Right ventricle myocardium inferior (tissue), 1 donor: ENCODE measurements at regions of chr3 and their contacts with region 1.

Region 1: DNA sequence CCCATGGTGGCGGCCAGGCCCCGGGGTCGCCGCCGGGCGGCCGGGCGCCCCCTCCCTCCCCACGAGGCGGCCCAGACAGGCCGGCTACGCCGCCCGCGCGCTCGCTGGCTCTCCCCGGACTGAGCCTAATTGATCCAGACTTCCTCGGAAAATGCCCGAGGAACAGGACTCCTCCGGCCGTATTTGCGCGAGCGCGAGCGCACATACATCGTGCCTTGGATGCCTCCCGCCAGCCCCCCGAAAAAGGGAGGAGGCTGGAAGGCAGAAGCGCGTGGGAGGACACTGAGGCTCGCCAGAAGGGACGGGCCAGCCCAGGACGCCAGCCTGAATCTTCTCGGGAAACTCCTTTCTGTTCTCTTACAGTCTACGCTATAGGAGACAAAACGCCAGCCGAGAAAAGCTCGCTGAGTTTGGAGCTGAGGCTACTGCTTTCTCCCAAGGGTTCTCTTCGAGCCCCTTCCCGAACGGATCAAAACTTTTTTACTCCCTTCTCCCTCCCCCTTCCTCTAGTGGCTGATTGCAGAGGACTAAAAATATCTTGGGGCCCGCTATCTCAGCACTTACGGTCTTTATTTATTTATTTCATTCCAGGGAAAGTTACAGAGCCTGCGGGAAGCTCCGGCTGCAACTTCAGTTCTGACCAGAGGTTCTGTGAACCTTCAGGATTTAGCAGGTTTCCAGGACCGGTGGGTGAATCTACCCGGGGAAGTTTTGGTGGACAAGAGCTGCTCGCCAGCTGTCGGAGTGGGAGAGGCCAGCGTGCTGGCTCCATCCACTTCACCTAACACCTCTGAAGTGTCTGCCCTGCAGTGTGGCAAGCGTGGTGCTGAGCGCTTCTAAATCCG is at the start of gene PDZRN3:
- DNase-seq: peak; percentile 78
- ATAC-seq: peak; percentile 35
- total RNA-seq, gene PDZRN3: 130 TPM

Region 2: GRCh38 chr3:73471986-73472787 is 152.9 kb before region 1 on chr3:
- intact Hi-C with region 1: no loop called
- DNase-seq: no peak
- ATAC-seq: peak; percentile 32

Region 3: DNA sequence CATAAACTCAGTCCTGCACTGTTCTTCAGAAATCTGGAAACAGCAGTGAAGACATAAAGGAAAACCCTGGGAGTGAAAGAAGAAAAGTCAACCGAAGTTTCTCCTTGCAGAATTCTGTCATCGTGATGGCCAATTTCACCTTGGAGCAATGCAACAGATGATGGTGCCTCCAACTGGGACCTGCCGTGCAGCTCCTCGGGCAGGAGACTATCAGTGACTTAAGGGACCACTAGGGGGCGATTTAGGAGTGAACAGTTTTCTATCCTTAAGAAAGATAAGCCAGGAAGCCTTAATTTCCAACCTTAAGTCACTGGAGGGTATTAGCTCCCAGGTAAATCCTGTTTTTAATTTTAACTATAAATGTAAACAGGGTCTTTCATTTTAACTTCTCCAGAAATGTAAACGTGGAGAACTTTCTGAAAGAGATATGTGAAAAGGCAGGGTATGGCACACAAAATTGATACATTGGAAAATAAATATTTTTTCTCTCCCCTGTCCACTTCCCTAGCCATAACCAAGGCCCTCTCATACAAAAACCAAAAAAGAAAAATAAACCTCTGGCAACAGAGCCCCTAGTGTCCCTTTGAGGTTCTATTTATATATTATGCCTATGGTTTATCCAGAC is 116.6 kb before region 1 on chr3:
- intact Hi-C with region 1: loop called (anchors 2 kb)
- DNase-seq: no peak
- ATAC-seq: peak; percentile 54

Region 4: GRCh38 chr3:73556520-73557372 is 68.3 kb before region 1 on chr3:
- intact Hi-C with region 1: loop called (anchors 5 kb)
- DNase-seq: no peak
- ATAC-seq: peak; percentile 37

Region 5: DNA sequence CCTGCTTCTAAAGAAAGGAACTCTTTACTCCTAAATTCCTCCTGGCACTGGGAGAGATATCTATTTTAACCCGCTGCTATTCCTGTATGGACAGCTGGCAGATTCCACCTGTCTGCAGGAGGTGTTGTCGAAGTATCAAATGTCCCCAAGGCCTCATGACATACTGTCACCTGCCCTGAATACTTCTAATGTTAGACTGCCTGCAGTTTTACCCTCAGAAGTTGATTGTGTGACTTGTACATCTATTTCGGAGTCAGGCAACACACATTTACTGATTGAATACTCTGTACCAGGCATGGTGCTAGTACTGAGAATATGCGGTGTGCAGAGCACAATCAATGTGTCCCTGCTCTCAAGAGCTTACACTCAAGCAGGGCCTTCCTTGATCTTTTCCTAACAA is 38.9 kb before region 1 on chr3:
- intact Hi-C with region 1: loop called (anchors 5 kb)
- DNase-seq: no peak
- ATAC-seq: peak; percentile 90

Region 6: GRCh38 chr3:73766599-73767381 is 141.7 kb after region 1 on chr3:
- intact Hi-C with region 1: loop called (anchors 10 kb)
- DNase-seq: no peak
- ATAC-seq: peak; percentile 79

Region 7: DNA sequence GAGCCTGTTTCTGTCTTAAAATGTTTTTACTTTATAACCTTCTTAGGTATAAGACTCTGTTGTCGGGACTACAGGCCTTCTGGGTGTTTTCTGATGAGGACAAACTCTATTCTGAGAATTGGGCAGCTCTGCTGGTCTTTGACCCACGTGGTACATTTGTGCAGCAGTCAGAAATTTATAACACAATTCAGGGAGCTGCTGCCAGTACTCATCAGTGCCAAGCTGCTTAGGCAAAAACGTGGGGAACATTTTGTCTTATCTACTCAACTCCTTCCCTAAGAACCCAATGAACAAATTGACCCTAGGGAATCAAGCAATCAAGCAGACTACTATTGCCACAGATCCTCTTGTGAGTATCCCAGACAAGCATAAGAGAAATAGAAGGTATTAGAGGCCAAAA is 180.4 kb after region 1 on chr3:
- intact Hi-C with region 1: loop called (anchors 5 kb)
- DNase-seq: peak; percentile 77
- ATAC-seq: peak; percentile 96

Region 8: GRCh38 chr3:73848173-73848906 is 223.3 kb after region 1 on chr3:
- intact Hi-C with region 1: loop called (anchors 5 kb)
- DNase-seq: no peak
- ATAC-seq: peak; percentile 57